GM13976 (cell line): ENCODE measurements at regions of chr18 and their contacts with region 1.

Region 1: DNA sequence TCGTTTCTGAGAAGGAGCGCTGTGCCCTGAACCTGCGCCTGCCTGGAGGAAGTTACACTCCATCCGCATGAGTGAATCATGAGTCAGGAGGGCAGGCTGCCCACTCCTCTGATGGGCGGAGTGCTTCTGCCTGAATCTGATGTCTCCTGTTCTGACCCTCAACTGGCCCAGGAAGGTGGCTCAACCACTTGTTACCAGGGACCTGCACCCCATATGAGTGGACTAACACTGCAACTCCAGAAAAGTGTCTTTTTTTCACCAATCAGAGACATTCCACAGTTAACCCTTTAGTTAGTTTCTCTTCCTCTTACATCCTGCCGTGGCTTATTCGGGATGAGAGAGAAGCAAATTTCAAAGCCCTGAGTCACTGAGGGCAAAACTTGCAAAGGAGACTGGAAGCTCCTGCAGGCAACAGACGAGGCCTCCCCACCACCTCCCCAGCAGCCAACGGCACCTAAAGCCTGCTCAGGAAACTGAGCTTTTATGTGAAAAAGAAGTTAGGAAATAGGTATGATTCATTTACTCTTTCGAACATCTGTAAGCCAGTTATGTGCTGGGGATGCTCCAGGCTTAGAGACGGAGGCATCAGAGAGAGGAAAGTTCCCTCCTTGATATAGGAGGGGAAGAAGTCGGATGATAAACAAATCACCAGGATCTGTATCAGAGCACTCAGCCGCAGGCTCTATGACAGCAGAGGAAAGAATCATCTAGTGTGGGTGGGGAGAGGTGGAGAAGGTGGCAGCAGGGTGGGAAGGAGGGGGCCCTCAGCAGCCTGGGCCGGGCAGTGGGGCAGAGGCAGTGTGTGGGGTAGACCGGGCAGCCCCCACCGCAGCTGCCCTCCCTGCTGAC is 30.9 kb downstream of the MBP start:
- DNase-seq: peak; percentile 72
- CTCF ChIP-seq: no peak

Region 2: GRCh38 chr18:76492669-76493212 is 608.9 kb before region 1 on chr18:
- in situ Hi-C with region 1: loop called (anchors 25 kb)
- DNase-seq: peak; percentile 94
- CTCF ChIP-seq: no peak

Region 3: GRCh38 chr18:76801567-76802505 is 299.8 kb before region 1 on chr18:
- in situ Hi-C with region 1: no loop called
- DNase-seq: peak; percentile 91
- CTCF ChIP-seq: peak; percentile 90

Region 4: GRCh38 chr18:77711096-77711495 is 609.5 kb after region 1 on chr18:
- in situ Hi-C with region 1: no loop called
- DNase-seq: no peak
- CTCF ChIP-seq: no peak